CD8-positive, alpha-beta memory T cell (primary cell): ENCODE measurements at regions of chr14 and their contacts with region 1.

Region 1: DNA sequence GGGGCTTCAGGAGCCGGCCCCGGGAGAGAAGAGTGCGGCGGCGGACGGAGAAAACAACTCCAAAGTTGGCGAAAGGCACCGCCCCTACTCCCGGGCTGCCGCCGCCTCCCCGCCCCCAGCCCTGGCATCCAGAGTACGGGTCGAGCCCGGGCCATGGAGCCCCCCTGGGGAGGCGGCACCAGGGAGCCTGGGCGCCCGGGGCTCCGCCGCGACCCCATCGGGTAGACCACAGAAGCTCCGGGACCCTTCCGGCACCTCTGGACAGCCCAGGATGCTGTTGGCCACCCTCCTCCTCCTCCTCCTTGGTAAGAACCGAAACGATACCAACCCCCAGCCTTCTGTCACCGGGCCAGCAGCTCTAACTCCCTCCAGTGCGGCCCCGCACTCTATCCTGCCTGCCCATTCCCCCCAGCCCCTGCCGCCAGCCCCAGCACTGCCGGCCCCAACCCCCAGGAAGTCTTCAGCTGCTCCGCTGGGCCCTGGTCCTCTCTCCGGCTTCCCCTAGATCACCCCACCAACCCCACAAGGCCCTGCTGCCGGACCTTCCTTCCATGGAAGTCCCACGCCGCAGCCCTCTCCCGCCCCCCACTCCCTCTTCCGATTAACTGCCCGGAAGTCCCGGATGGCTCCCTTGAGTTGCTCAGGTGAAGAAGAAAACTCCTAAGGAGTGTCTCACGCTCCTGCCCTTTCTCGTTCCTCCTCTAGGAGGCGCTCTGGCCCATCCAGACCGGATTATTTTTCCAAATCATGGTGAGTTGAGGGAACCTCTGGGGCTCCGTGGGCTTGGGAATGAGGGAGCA is 693 bp downstream of the LRP10 start:
- DNase-seq: peak; percentile 60 to 78 (median 67)
- H3K4me3 ChIP-seq: peak overlapping the region; percentile 84
- H3K4me3 Mint-ChIP-seq: peak overlapping the region; percentile 93 to 98 (median 94)
- H3K27ac ChIP-seq: peak overlapping the region; percentile 89
- H3K27ac Mint-ChIP-seq: peak overlapping the region; percentile 64 to 99 (median 98)
- H3K4me1 ChIP-seq: peaks cover 24% of the 10 kb centered on the region
- H3K4me1 Mint-ChIP-seq: peaks cover 30 to 39% (median 33%) of the 10 kb centered on the region in 3 donors
- H3K27me3 ChIP-seq: no peaks in the 10 kb centered on the region
- H3K27me3 Mint-ChIP-seq: no peaks in the 10 kb centered on the region

Region 2: GRCh38 chr14:22802860-22803686 is 69.2 kb before region 1 on chr14:
- CTCF ChIA-PET with region 1: no interaction called
- POLR2A ChIA-PET with region 1: no interaction called
- DNase-seq: no peak
- H3K4me3 ChIP-seq: no peak overlapping the region
- H3K4me3 Mint-ChIP-seq: no peak overlapping the region
- H3K27ac ChIP-seq: no peak overlapping the region
- H3K27ac Mint-ChIP-seq: no peak overlapping the region
- H3K4me1 ChIP-seq: no peaks in the 10 kb centered on the region
- H3K4me1 Mint-ChIP-seq: no peaks in the 10 kb centered on the region
- H3K27me3 ChIP-seq: no peaks in the 10 kb centered on the region
- H3K27me3 Mint-ChIP-seq: peaks cover 30 to 69% of the 10 kb centered on the region in 2 donors

Region 3: DNA sequence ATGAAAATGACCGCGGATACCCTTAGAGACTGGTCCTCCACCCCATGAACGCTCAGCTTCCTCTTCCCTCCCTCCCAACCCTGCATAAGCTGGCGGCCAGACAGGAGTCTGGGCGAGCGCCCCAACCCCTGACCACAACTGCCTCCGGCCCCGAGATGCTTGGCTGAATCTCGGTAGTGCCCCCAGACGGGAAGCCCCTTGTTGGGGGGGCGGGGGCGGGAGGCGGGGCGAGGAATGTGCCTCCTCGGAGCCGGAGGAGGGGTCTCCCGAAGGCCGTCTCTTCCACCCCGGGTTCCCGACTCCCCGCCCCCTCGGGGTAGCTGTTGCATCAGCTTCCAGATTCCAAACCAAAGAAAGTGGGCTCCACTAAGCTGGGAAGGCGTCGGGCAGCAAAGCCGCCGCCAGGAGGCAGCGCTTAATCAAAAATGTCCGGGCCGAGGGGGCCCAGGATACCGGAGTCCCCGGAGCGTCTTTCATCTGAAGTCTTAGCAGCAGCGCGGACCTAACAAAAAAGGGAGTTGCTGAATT is 49.6 kb before region 1 on chr14:
- CTCF ChIA-PET with region 1: interaction called, 12 read pairs
- POLR2A ChIA-PET with region 1: interaction called, 4 read pairs
- DNase-seq: peak; percentile 53 to 81 (median 57)
- H3K4me3 ChIP-seq: peak overlapping the region; percentile 13
- H3K4me3 Mint-ChIP-seq: peak overlapping the region in 6 of 7 donors; percentile 41 to 72 (median 66)
- H3K27ac ChIP-seq: no peak overlapping the region
- H3K27ac Mint-ChIP-seq: peak overlapping the region in 1 of 8 donors; percentile 15
- H3K4me1 ChIP-seq: peaks cover 19% of the 10 kb centered on the region
- H3K4me1 Mint-ChIP-seq: peaks cover 8 to 12% (median 9%) of the 10 kb centered on the region in 3 donors
- H3K27me3 ChIP-seq: no peaks in the 10 kb centered on the region
- H3K27me3 Mint-ChIP-seq: peaks cover 35 to 45% of the 10 kb centered on the region in 2 donors

Region 4: GRCh38 chr14:22900081-22900799 is 28.0 kb after region 1 on chr14:
- CTCF ChIA-PET with region 1: interaction called, 43 read pairs
- POLR2A ChIA-PET with region 1: interaction called, 3 read pairs
- DNase-seq: peak in 2 of 5 donors; percentile 49 to 57
- H3K4me3 ChIP-seq: no peak overlapping the region
- H3K4me3 Mint-ChIP-seq: no peak overlapping the region
- H3K27ac ChIP-seq: no peak overlapping the region
- H3K27ac Mint-ChIP-seq: peak overlapping the region in 6 of 8 donors; percentile 0 to 65 (median 26)
- H3K4me1 ChIP-seq: peaks cover 7% of the 10 kb centered on the region
- H3K4me1 Mint-ChIP-seq: peaks cover 5 to 10% (median 5%) of the 10 kb centered on the region in 3 donors
- H3K27me3 ChIP-seq: no peaks in the 10 kb centered on the region
- H3K27me3 Mint-ChIP-seq: no peaks in the 10 kb centered on the region

Region 5: DNA sequence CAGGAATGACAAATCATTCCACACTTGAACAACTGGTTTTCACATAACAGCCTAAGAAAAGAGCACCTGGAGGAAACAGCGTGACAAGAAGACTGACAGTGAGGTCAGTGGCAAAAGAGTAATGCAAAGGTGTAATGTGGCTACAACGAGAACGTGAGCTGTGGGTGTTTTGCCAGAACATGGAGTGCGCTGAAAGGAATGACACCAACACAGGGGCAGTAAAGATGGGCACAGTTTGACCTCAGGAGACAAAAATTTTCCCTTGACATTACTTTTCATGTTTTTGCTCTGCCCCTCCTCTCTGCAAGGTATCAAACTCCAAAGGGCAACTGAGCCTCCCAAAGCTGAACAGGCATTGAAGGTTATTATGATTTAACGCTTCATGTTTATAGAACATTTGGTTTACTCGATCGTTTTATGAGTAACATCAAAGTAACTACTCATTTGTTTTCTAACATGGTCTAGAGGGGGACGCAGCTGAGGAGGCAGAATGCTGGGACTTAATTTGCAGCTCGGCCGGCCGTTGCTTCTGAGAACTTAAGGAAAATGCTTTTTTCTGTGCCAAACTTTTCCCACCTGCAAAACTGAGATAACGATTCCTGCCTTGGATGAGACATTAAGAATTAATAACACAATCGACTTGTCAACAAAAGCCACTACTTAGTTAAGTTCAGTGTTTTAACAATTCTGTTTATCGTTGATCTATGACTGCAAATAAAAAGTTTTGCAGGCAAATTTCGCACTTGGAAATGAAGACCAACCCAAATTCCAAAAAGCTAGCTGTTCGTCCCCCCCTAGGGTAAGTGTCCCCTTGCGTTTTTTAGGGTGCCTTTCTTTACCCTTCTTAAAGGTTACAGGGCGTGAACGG is 83.7 kb after region 1 on chr14:
- CTCF ChIA-PET with region 1: interaction called, 12 read pairs
- POLR2A ChIA-PET with region 1: no interaction called
- DNase-seq: no peak
- H3K4me3 ChIP-seq: peak overlapping the region; percentile 87
- H3K4me3 Mint-ChIP-seq: peak overlapping the region; percentile 89 to 96 (median 91)
- H3K27ac ChIP-seq: peak overlapping the region; percentile 84
- H3K27ac Mint-ChIP-seq: peak overlapping the region; percentile 67 to 97 (median 90)
- H3K4me1 ChIP-seq: peaks cover 19% of the 10 kb centered on the region
- H3K4me1 Mint-ChIP-seq: peaks cover 14 to 24% (median 17%) of the 10 kb centered on the region in 3 donors
- H3K27me3 ChIP-seq: no peaks in the 10 kb centered on the region
- H3K27me3 Mint-ChIP-seq: no peaks in the 10 kb centered on the region

Region 6: GRCh38 chr14:22966783-22967269 is 94.6 kb after region 1 on chr14:
- CTCF ChIA-PET with region 1: no interaction called
- POLR2A ChIA-PET with region 1: no interaction called
- DNase-seq: no peak
- H3K4me3 ChIP-seq: no peak overlapping the region
- H3K4me3 Mint-ChIP-seq: no peak overlapping the region
- H3K27ac ChIP-seq: no peak overlapping the region
- H3K27ac Mint-ChIP-seq: no peak overlapping the region
- H3K4me1 ChIP-seq: no peaks in the 10 kb centered on the region
- H3K4me1 Mint-ChIP-seq: no peaks in the 10 kb centered on the region
- H3K27me3 ChIP-seq: peaks cover 4% of the 10 kb centered on the region
- H3K27me3 Mint-ChIP-seq: peaks cover 9% of the 10 kb centered on the region in 2 donors